Psoas muscle (tissue), 8 donors: ENCODE measurements at regions of chr11 and their contacts with region 1.

Region 1: GRCh38 chr11:35391922-35392813 is 27.2 kb downstream of the SLC1A2 start:
- DNase-seq: peak; percentile 84 to 88
- ATAC-seq: peak; percentile 80 to 95 (median 88)
- H3K4me3 ChIP-seq: no peak overlapping the region
- H3K27ac ChIP-seq: no peak overlapping the region
- H3K4me1 ChIP-seq: peaks cover 5% of the 10 kb centered on the region
- H3K27me3 ChIP-seq: no peaks in the 10 kb centered on the region
- CTCF ChIP-seq: peak; percentile 89

Region 2: GRCh38 chr11:34585735-34586487 is 806.3 kb before region 1 on chr11:
- intact Hi-C with region 1: loop called (anchors 5 to 10 kb)
- DNase-seq: no peak
- ATAC-seq: peak; percentile 56 to 83 (median 64)
- H3K4me3 ChIP-seq: peak overlapping the region; percentile 35
- H3K27ac ChIP-seq: no peak overlapping the region
- H3K4me1 ChIP-seq: peaks cover 3% of the 10 kb centered on the region
- H3K27me3 ChIP-seq: peaks cover 0 to 3% (median 0%) of the 10 kb centered on the region in 3 donors
- CTCF ChIP-seq: peak; percentile 74

Region 3: GRCh38 chr11:34926101-34926830 is 465.9 kb before region 1 on chr11:
- intact Hi-C with region 1: loop called (anchors 2 to 5 kb)
- DNase-seq: no peak
- ATAC-seq: peak in 3 of 4 donors; percentile 61 to 82 (median 65)
- H3K4me3 ChIP-seq: no peak overlapping the region
- H3K27ac ChIP-seq: no peak overlapping the region
- H3K4me1 ChIP-seq: peaks cover 61% of the 10 kb centered on the region
- H3K27me3 ChIP-seq: no peaks in the 10 kb centered on the region
- CTCF ChIP-seq: peak; percentile 78

Region 4: GRCh38 chr11:34997952-34998528 is 394.1 kb before region 1 on chr11:
- intact Hi-C with region 1: loop called (anchors 5 to 10 kb)
- DNase-seq: no peak
- ATAC-seq: peak in 2 of 4 donors; percentile 47 to 57
- H3K4me3 ChIP-seq: no peak overlapping the region
- H3K27ac ChIP-seq: no peak overlapping the region
- H3K4me1 ChIP-seq: peaks cover 1% of the 10 kb centered on the region
- H3K27me3 ChIP-seq: no peaks in the 10 kb centered on the region
- CTCF ChIP-seq: peak; percentile 43

Region 5: DNA sequence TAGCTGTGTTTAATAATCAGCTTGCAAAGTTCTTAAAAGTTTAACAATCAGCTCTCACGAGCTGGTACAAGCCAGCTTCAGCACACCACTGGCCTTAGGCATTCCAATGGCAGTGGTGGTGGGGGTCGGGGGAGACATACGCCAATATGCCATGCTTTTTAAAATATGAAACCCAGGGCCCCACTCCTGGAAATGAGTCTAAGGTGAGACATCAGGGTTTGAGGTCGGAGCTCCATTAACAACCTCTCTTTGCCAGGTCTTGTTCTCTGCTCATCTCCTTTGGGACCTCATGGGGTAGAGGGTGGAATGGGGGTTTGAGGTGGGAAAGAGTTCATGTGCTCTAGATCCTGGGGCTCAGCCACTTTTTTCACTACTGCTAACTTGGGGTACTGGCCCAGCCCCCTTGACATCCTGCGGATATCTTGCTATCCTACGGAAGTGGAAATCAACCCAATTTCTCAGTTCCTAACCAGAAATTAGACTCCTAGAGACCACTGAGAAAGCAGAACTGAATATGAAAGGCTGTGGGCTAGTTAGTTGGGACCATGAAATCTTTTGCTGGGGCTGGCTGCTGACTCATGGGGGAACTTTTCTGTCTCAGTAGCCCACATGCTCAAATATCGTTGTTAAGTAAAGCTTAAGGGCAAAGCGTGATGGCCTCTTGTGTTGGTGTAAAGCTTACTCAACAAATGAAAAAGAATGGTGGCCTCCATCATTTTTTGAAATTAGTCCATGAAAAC is 385.6 kb before region 1 on chr11:
- intact Hi-C with region 1: loop called in 1 of 2 experiments (anchors 10 kb)
- DNase-seq: no peak
- ATAC-seq: no peak
- H3K4me3 ChIP-seq: no peak overlapping the region
- H3K27ac ChIP-seq: no peak overlapping the region
- H3K4me1 ChIP-seq: peaks cover 30% of the 10 kb centered on the region
- H3K27me3 ChIP-seq: no peaks in the 10 kb centered on the region
- CTCF ChIP-seq: no peak

Region 6: GRCh38 chr11:35260342-35260985 is 131.7 kb before region 1 on chr11:
- intact Hi-C with region 1: loop called in 1 of 2 experiments (anchors 5 kb)
- DNase-seq: no peak
- ATAC-seq: no peak
- H3K4me3 ChIP-seq: no peak overlapping the region
- H3K27ac ChIP-seq: no peak overlapping the region
- H3K4me1 ChIP-seq: no peaks in the 10 kb centered on the region
- H3K27me3 ChIP-seq: peaks cover 0 to 3% (median 0%) of the 10 kb centered on the region in 3 donors
- CTCF ChIP-seq: no peak